ENCODE measurements at regions of chr11 and their contacts with region 1.

Region 1: DNA sequence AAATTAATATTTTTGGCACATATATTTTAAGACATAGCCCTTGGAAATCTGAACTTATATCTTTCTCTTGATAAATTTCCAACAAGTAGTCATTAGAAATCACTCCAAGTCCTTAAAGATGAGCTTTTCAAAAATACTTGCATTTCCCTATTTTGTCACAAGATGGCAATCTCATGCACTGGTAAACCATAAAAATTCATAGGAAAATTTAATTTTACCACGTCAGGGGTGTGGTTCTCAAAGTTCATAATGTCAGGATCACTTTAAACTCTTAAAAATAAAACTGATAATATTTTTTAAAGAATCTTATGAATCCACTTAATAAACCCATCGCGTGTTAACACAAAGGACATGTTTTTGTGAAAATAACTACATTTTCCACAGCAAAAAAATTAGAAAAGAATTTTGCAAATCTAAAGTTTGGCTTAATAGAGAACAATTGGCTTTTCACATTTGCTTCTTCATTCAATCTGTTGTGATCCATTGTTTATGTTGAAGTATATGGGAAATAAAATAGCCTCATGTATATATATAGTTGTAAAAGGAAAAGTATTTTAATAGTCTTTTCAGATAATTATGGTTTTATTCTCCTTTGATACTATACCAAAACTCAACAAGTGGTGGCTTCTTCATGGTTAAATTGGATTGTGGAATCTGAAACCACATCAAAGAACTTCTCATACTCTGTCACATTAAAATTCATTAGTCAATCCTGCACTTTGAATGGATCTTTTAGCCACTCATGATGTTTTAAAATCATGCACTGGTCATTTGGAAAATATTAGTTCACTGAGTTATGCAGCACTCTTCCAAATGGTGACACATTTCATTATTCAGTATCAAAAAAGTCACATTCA is 169.1 kb downstream of the CADM1 start:
- DNase-seq: peak; percentile 14 to 20 (median 16)
- ATAC-seq: no peak
- H3K4me3 ChIP-seq: no peak overlapping the region
- H3K27ac ChIP-seq: no peak overlapping the region
- H3K4me1 ChIP-seq: no peaks in the 10 kb centered on the region
- H3K27me3 ChIP-seq: no peaks in the 10 kb centered on the region
- CTCF ChIP-seq: peak in 2 of 3 experiments; percentile 32 to 61; a peak in 3 of 6 replicates
- EP300 ChIP-seq: no peak
- POLR2A ChIP-seq: no peak
- RAD21 ChIP-seq: peak; percentile 60 to 64

Region 2: GRCh38 chr11:115980337-115981103 is 645.4 kb after region 1 on chr11:
- CTCF ChIA-PET with region 1: no interaction called
- POLR2A ChIA-PET with region 1: no interaction called
- in situ Hi-C with region 1: no loop called
- intact Hi-C with region 1: loop called (anchors 10 kb)
- DNase-seq: no peak
- ATAC-seq: no peak
- H3K4me3 ChIP-seq: no peak overlapping the region
- H3K27ac ChIP-seq: no peak overlapping the region
- H3K4me1 ChIP-seq: no peaks in the 10 kb centered on the region
- H3K27me3 ChIP-seq: no peaks in the 10 kb centered on the region
- CTCF ChIP-seq: no peak
- EP300 ChIP-seq: no peak
- POLR2A ChIP-seq: no peak
- RAD21 ChIP-seq: no peak